GM12878 (cell line): ENCODE measurements at regions of chr5 and their contacts with region 1.

Region 1: GRCh38 chr5:137498736-137499505 is at the start of gene SPOCK1:
- DNase-seq: no peak
- ATAC-seq: peak; percentile 100
- H3K4me3 ChIP-seq: no peak within 1 kb of the TSS
- H3K27ac ChIP-seq: no peak within 1 kb of the TSS
- H3K4me1 ChIP-seq: no peaks in the 10 kb centered on the region
- H3K27me3 ChIP-seq: peaks cover 4 to 10% of the 10 kb centered on the region in 2 experiments
- CTCF ChIP-seq: peak; percentile 57 to 76 (median 70); a peak in 5 of 6 replicates
- EP300 ChIP-seq: no peak
- POLR2A ChIP-seq: no peak
- RAD21 ChIP-seq: peak; percentile 68
- polyA plus RNA-seq, gene SPOCK1: not detected

Region 2: GRCh38 chr5:137344723-137345322 is 154.1 kb before region 1 on chr5:
- CTCF ChIA-PET with region 1: interaction called, 6 read pairs
- POLR2A ChIA-PET with region 1: no interaction called
- RAD21 ChIA-PET with region 1: interaction called, 3 read pairs
- SMC1A ChIA-PET with region 1: interaction called, 6 read pairs
- in situ Hi-C with region 1: no loop called
- intact Hi-C with region 1: loop called (anchors 1 kb)
- DNase-seq: no peak
- ATAC-seq: peak; percentile 34; the same call in 1 of the 3 replicates
- H3K4me3 ChIP-seq: no peak overlapping the region
- H3K27ac ChIP-seq: no peak overlapping the region
- H3K4me1 ChIP-seq: no peaks in the 10 kb centered on the region
- H3K27me3 ChIP-seq: no peaks in the 10 kb centered on the region
- CTCF ChIP-seq: peak; percentile 45 to 96 (median 82)
- EP300 ChIP-seq: no peak
- POLR2A ChIP-seq: no peak
- RAD21 ChIP-seq: peak; percentile 60